PC-9 (cell line): ENCODE measurements at regions of chr10 and their contacts with region 1.

Region 1: GRCh38 chr10:69994262-69994661 is 58.4 kb upstream of the MACROH2A2 start:
- DNase-seq: no peak
- H3K4me3 ChIP-seq: no peak overlapping the region
- H3K27ac ChIP-seq: no peak overlapping the region
- H3K4me1 ChIP-seq: no peaks in the 10 kb centered on the region
- H3K27me3 ChIP-seq: 0 out of 2 replicates have a peak, but pooled peaks cover 10% of the 10 kb centered on the region
- CTCF ChIP-seq: no peak

Region 2: GRCh38 chr10:69612760-69613159 is 381.5 kb before region 1 on chr10:
- CTCF ChIA-PET with region 1: interaction called, 21 read pairs
- POLR2A ChIA-PET with region 1: no interaction called
- intact Hi-C with region 1: no loop called
- DNase-seq: no peak
- H3K4me3 ChIP-seq: no peak overlapping the region
- H3K27ac ChIP-seq: no peak overlapping the region
- H3K4me1 ChIP-seq: no peaks in the 10 kb centered on the region
- H3K27me3 ChIP-seq: peaks cover 60% of the 10 kb centered on the region
- CTCF ChIP-seq: no peak

Region 3: GRCh38 chr10:69728335-69728870 is 265.9 kb before region 1 on chr10:
- CTCF ChIA-PET with region 1: no interaction called
- POLR2A ChIA-PET with region 1: no interaction called
- intact Hi-C with region 1: no loop called
- DNase-seq: peak; percentile 32 to 70
- H3K4me3 ChIP-seq: no peak overlapping the region
- H3K27ac ChIP-seq: no peak overlapping the region
- H3K4me1 ChIP-seq: peaks cover 10% of the 10 kb centered on the region
- H3K27me3 ChIP-seq: peaks cover 15% of the 10 kb centered on the region; the same call in 1 of the 2 replicates
- CTCF ChIP-seq: no peak

Region 4: GRCh38 chr10:69883310-69884023 is 110.8 kb before region 1 on chr10:
- CTCF ChIA-PET with region 1: no interaction called
- POLR2A ChIA-PET with region 1: no interaction called
- intact Hi-C with region 1: no loop called
- DNase-seq: peak; percentile 38 to 69
- H3K4me3 ChIP-seq: no peak overlapping the region
- H3K27ac ChIP-seq: no peak overlapping the region
- H3K4me1 ChIP-seq: no peaks in the 10 kb centered on the region
- H3K27me3 ChIP-seq: no peaks in the 10 kb centered on the region
- CTCF ChIP-seq: peak; percentile 71

Region 5: DNA sequence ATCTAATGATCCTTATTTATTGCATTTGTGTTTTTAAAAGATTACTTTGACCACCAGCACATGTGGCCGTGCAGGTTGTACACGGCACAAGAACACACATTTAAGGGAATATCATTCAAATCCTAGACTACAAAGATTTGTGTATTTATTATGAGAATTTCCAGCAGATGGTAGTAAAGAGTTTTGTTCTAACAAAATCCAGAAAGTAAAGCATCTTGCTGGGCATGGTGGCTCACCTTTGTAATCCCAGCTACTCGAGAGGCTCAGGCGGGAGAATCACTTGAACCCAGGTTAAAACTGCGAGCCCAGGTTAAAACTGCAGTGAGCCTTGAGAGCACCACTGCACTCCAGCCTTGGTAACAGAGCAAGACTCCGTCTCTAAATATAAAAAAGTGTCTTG is 89.9 kb after region 1 on chr10:
- CTCF ChIA-PET with region 1: no interaction called
- POLR2A ChIA-PET with region 1: no interaction called
- intact Hi-C with region 1: no loop called
- DNase-seq: no peak
- H3K4me3 ChIP-seq: no peak overlapping the region
- H3K27ac ChIP-seq: no peak overlapping the region
- H3K4me1 ChIP-seq: no peaks in the 10 kb centered on the region
- H3K27me3 ChIP-seq: no peaks in the 10 kb centered on the region
- CTCF ChIP-seq: no peak; the same call in 1 of the 2 replicates

Region 6: DNA sequence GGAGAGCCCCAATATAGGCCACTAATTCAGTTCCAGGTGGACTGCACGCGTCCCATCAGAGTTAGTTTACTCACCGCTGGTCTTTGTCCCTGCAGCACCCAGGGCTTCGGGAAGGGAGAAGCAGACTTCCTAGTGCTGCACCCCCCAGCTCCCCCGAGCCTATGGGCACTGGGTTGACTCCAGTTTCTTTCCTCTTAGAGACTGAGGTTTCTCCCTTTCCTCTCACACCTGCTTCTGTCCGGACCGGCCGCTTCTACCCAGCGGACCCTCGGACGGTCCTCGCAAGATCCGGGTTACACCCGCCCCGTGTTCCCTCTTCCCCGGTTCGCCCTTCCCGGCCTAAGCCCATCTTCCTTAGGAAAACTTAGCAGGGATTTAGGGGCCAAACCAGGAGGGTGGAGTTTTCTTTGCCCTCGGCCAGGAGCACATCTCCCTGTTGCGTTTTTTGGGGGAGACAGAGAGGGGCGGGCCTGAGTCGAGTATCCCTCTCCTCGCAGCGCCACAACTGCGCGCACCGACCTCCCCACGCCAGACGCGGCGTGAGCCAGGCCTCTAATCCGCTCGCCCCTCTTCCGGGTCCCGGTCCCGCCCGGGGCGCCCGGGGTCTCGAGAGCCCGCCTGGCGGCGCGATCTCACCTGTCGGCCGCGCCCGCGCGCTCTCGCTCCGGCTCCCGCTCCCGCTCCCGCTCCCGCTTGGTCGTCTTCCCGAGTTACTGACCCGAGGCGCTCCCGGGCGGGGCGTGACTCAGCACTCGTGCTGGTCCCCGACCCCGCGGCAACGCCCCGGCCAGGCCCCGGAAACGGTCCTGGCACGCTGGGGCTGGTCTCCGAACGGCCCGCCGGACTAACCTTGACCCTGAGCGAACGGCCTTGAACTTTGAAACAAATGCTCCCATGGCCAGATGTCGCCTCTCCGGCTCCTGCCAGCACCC is 138.1 kb after region 1 on chr10 and contains the start of gene AIFM2:
- CTCF ChIA-PET with region 1: no interaction called
- POLR2A ChIA-PET with region 1: no interaction called
- intact Hi-C with region 1: no loop called
- DNase-seq: peak; percentile 78 to 90
- H3K4me3 ChIP-seq: peak within 1 kb of the TSS; percentile 100
- H3K27ac ChIP-seq: peak within 1 kb of the TSS; percentile 90
- H3K4me1 ChIP-seq: peaks cover 20% of the 10 kb centered on the region
- H3K27me3 ChIP-seq: no peaks in the 10 kb centered on the region
- CTCF ChIP-seq: peak; percentile 19; the same call in 1 of the 2 replicates
- total RNA-seq, gene AIFM2: 40.3 and 47.0 TPM in 2 replicates